AG04450 (cell line): ENCODE measurements at regions of chr4 and their contacts with region 1.

Region 1: DNA sequence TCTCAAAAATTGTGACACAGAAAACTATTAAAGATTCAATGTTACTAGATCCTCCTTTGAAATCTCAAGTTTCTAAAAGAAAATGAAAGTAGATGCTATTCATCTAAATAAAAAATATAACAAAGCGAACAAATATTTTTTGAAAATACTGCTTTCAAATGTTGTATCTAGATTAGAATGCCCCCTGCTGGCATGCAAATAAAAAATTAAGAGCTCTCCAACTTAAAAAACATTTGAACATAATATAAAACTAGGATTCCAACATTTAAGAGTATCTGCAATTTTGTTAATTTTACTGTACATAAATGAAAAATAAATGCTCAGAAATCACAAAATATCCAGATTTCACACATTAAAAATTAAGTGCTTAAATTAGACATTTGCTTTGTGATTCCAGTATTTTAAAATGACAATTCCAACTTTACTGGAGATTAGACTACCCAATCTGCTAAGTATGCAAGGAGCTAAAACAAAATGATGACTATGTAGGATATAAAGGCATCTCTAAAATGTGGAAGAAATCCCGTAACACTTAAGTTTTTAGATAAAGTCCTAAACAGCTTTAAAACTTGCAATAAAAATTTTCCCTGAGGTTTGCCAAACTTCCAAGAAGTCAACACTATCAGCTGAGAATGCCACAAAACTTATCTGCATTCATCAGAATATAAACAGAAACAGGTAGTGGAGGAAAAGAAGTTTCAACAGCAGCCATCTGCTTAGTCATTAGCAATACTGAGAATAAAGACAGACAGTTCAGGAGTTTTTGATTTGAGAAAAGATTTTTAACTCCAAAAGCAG is 32.7 kb downstream of the DHX15 start:
- DNase-seq: no peak
- H3K4me3 ChIP-seq: no peak overlapping the region
- H3K27ac ChIP-seq: no peak overlapping the region
- H3K27me3 ChIP-seq: no peaks in the 10 kb centered on the region
- CTCF ChIP-seq: peak; percentile 54

Region 2: DNA sequence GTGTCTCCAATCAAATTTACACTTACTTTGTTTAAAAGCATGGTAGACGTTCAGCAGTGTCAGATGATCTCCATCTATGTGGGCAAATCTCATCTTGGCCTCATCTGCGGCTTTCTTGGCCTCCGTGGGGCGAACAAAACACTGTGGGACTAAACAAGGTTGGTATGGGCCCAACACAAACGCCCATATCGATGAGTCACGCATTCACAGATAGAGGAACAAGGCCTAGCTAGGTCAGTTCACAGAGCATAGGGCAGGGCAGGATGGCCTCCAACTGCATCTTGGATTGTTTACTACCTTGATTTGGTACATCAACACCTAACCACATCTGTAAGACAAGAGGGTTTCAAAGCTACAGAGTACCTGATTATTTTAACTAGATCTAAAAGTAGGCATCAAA is 14.7 kb before region 1 on chr4:
- CTCF ChIA-PET with region 1: interaction called, 27 read pairs
- POLR2A ChIA-PET with region 1: no interaction called
- DNase-seq: no peak
- H3K4me3 ChIP-seq: no peak overlapping the region
- H3K27ac ChIP-seq: no peak overlapping the region
- H3K27me3 ChIP-seq: no peaks in the 10 kb centered on the region
- CTCF ChIP-seq: no peak

Region 3: GRCh38 chr4:24570574-24571236 is 19.0 kb after region 1 on chr4:
- CTCF ChIA-PET with region 1: interaction called, 12 read pairs
- POLR2A ChIA-PET with region 1: no interaction called
- DNase-seq: no peak
- H3K4me3 ChIP-seq: no peak overlapping the region
- H3K27ac ChIP-seq: no peak overlapping the region
- H3K27me3 ChIP-seq: no peaks in the 10 kb centered on the region
- CTCF ChIP-seq: no peak